H1 (cell line): ENCODE measurements at regions of chr9 and their contacts with region 1.

Region 1: DNA sequence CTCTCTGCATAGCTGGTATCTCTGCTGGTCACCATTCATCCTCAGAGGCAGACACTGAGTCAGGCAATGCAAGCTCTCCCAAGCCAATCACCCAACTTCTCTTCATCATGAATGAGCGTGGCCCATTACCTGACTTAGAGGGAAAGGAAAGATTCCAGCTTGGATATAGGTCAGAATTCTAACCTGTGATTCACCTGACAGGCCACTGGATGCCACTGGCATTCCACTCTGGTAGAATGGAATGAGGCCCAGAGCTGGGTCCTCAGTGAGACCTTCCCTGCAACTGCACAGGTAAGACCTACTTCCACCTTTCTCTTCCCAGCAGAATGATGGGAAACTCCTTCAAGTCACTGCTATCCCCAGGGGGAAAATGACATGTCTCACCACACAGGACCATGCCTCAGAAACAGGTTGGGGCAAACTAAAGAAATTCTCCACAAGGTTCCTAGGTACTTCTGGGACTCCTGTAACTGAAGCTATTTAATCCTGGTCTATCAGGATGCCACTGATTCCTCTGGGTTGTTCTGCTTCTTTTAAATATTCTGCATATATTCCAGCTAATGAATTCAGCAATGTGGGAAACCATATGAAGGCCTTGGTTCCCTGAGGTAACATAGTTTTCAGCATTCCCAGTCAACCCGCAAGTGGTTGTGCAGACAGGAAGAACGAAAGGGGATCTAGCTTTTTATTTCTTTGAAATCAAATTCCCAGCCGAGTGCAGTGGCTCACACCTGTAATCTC is 62.0 kb downstream of the SUSD1 start:
- DNase-seq: peak; percentile 46 to 52
- H3K4me3 ChIP-seq: no peak overlapping the region
- H3K27ac ChIP-seq: no peak overlapping the region
- H3K4me1 ChIP-seq: no peaks in the 10 kb centered on the region
- H3K27me3 ChIP-seq: no peaks in the 10 kb centered on the region
- CTCF ChIP-seq: peak; percentile 49 to 88 (median 86)
- EP300 ChIP-seq: no peak
- POLR2A ChIP-seq: no peak
- RAD21 ChIP-seq: peak; percentile 99

Region 2: GRCh38 chr9:112012026-112012902 is 100.8 kb before region 1 on chr9:
- CTCF ChIA-PET with region 1: no interaction called
- POLR2A ChIA-PET with region 1: no interaction called
- DNase-seq: no peak
- H3K4me3 ChIP-seq: no peak overlapping the region
- H3K27ac ChIP-seq: no peak overlapping the region
- H3K4me1 ChIP-seq: no peaks in the 10 kb centered on the region
- H3K27me3 ChIP-seq: no peaks in the 10 kb centered on the region
- CTCF ChIP-seq: no peak
- EP300 ChIP-seq: no peak
- POLR2A ChIP-seq: no peak
- RAD21 ChIP-seq: no peak

Region 3: GRCh38 chr9:112086627-112087026 is 26.5 kb before region 1 on chr9:
- CTCF ChIA-PET with region 1: interaction called, 21 read pairs
- POLR2A ChIA-PET with region 1: no interaction called
- DNase-seq: no peak
- H3K4me3 ChIP-seq: no peak overlapping the region
- H3K27ac ChIP-seq: no peak overlapping the region
- H3K4me1 ChIP-seq: no peaks in the 10 kb centered on the region; a peak in 1 of 7 replicates
- H3K27me3 ChIP-seq: no peaks in the 10 kb centered on the region
- CTCF ChIP-seq: peak in 2 of 3 experiments; percentile 48 to 56; a peak in 2 of 4 replicates
- EP300 ChIP-seq: no peak
- POLR2A ChIP-seq: no peak
- RAD21 ChIP-seq: peak; percentile 75 to 77

Region 4: GRCh38 chr9:112097712-112098688 is 15.1 kb before region 1 on chr9:
- CTCF ChIA-PET with region 1: interaction called, 18 read pairs
- POLR2A ChIA-PET with region 1: interaction called, 4 read pairs
- DNase-seq: peak; percentile 72 to 81
- H3K4me3 ChIP-seq: peak overlapping the region in 1 of 4 experiments; percentile 27; a peak in 2 of 8 replicates
- H3K27ac ChIP-seq: peak overlapping the region; percentile 16; the same call in 1 of the 2 replicates
- H3K4me1 ChIP-seq: peaks cover 3 to 13% (median 5%) of the 10 kb centered on the region in 4 experiments; a peak in 6 of 7 replicates
- H3K27me3 ChIP-seq: no peaks in the 10 kb centered on the region
- CTCF ChIP-seq: peak; percentile 36 to 86 (median 79)
- EP300 ChIP-seq: no peak
- POLR2A ChIP-seq: no peak
- RAD21 ChIP-seq: peak; percentile 75 to 86

Region 5: DNA sequence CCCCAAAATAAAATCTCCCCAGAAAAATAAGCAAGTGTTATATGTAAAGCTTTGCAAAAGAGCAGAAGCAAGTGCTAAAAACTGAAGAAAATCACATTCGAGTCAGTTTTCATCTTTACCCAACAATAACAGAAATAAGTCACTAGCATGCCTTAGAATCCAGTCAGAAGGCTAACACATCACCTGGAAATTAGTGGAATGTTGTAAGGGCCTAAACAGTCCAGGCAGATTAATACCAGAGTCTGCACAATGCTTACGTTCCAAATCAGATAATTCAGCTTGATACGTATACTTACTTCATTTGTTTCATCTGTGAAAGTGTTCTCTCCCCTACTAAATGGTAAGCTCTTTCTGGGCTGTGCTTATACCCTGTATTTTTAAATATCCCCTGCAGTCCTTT is 19.2 kb after region 1 on chr9:
- CTCF ChIA-PET with region 1: interaction called, 24 read pairs
- POLR2A ChIA-PET with region 1: no interaction called
- DNase-seq: no peak
- H3K4me3 ChIP-seq: no peak overlapping the region
- H3K27ac ChIP-seq: no peak overlapping the region
- H3K4me1 ChIP-seq: peaks cover 0 to 7% (median 2%) of the 10 kb centered on the region in 4 experiments; a peak in 3 of 7 replicates
- H3K27me3 ChIP-seq: no peaks in the 10 kb centered on the region
- CTCF ChIP-seq: no peak
- EP300 ChIP-seq: no peak
- POLR2A ChIP-seq: no peak
- RAD21 ChIP-seq: no peak

Region 6: DNA sequence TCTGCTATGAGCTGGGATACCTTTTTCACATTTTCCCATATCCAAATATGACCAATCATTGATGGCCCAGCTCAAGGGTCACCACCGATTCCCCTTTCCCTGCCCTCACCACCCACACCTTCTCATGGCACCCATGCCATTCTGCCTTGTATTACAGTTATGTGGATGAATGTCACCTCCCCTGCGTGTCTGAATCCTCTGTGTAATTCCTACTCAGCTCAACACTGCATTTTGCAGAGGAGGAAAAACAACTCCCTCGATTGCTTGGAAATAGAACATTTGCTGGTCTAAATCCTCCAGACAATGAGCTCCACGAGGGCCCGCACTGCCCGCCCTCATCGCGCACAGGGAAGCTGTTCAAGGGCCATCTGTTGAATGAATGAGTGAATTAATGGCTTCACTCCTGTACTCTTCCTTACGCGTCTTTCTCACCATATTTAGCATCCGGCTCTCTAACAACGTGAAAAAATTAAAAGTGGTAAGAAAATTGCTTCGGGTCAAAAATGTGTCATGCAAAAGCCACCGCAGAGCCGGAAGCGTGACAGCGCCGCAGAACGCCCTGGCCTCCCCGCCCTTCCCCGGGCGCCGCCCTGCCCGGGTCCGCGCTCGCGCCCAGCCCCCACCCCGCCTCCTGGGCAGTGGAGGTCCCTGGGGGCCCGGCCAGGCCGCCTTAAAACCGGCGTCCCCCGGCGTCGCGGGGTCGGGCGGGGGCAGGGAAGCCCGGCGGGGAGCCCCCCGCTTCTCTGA is 61.3 kb after region 1 on chr9:
- CTCF ChIA-PET with region 1: interaction called, 14 read pairs
- POLR2A ChIA-PET with region 1: no interaction called
- DNase-seq: no peak
- H3K4me3 ChIP-seq: peak overlapping the region; percentile 56 to 74 (median 72)
- H3K27ac ChIP-seq: no peak overlapping the region
- H3K4me1 ChIP-seq: peaks cover 0 to 17% (median 6%) of the 10 kb centered on the region in 4 experiments; a peak in 5 of 7 replicates
- H3K27me3 ChIP-seq: peaks cover 0 to 35% (median 17%) of the 10 kb centered on the region in 4 experiments; a peak in 5 of 7 replicates
- CTCF ChIP-seq: no peak
- EP300 ChIP-seq: no peak
- POLR2A ChIP-seq: no peak
- RAD21 ChIP-seq: no peak

Region 7: GRCh38 chr9:112224401-112225289 is 111.5 kb after region 1 on chr9:
- CTCF ChIA-PET with region 1: interaction called, 10 read pairs
- POLR2A ChIA-PET with region 1: no interaction called
- DNase-seq: no peak
- H3K4me3 ChIP-seq: no peak overlapping the region
- H3K27ac ChIP-seq: no peak overlapping the region
- H3K4me1 ChIP-seq: no peaks in the 10 kb centered on the region
- H3K27me3 ChIP-seq: no peaks in the 10 kb centered on the region
- CTCF ChIP-seq: no peak
- EP300 ChIP-seq: no peak
- POLR2A ChIP-seq: no peak
- RAD21 ChIP-seq: no peak

Region 8: GRCh38 chr9:112361601-112362000 is 248.5 kb after region 1 on chr9:
- CTCF ChIA-PET with region 1: interaction called, 69 read pairs
- POLR2A ChIA-PET with region 1: no interaction called
- DNase-seq: no peak
- H3K4me3 ChIP-seq: no peak overlapping the region
- H3K27ac ChIP-seq: no peak overlapping the region
- H3K4me1 ChIP-seq: no peaks in the 10 kb centered on the region
- H3K27me3 ChIP-seq: no peaks in the 10 kb centered on the region
- CTCF ChIP-seq: peak in 1 of 3 experiments; percentile 34; a peak in 1 of 4 replicates
- EP300 ChIP-seq: no peak
- POLR2A ChIP-seq: no peak
- RAD21 ChIP-seq: peak; percentile 55 to 61